PC-9 (cell line): ENCODE measurements at regions of chr12 and their contacts with region 1.

Region 1: DNA sequence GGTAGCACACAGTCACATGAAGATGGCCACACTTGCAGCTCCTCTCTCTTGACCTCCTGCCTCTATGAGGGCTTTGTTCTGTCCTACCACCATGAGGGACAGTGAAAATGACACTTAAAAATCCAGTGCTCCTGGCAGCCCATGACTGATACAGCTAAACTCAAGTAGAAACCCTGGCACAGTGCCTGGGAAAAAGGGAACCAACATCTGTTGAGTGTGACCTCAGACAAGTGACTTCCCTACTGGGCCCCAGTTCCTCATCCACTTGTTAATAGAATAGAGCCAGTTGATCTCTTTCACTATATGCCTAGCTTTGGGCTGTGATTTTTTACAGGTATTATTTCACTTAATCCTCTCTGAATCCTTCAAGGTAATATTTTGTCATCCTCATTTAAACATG is 4.8 kb downstream of the GUCY2C start:
- DNase-seq: no peak
- H3K4me3 ChIP-seq: no peak overlapping the region
- H3K27ac ChIP-seq: no peak overlapping the region
- H3K4me1 ChIP-seq: no peaks in the 10 kb centered on the region
- H3K27me3 ChIP-seq: no peaks in the 10 kb centered on the region
- CTCF ChIP-seq: no peak

Region 2: DNA sequence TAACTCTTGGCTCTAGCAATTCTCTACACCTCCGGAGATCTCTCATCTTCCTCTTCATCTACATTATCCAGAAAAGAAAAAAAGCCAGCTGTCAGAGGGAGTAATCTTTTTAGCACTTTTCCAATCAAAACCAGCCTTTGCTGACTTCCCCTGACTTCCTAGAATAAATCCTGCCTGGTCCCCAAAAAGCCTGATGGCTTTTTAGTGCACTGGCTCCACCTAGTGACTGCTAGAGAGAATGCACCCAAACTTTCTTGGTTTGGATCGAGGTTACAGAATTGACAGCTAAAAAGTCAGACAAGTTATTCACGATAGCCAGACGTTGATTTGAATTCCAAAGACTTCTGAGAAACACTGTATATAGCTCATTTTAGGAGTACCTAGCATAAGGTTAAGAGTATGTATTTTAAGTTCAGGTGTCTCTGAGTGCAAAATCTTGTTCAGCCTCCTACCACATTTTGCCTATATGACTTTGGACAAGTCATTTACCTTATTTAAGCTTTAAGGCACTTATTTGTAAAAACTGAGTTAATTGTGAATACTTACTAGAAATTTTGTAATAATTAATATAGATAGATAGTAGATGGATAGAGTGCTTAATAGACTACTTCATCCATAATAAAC is 524.4 kb before region 1 on chr12:
- CTCF ChIA-PET with region 1: no interaction called
- POLR2A ChIA-PET with region 1: no interaction called
- intact Hi-C with region 1: no loop called
- DNase-seq: peak; percentile 46 to 61
- H3K4me3 ChIP-seq: no peak overlapping the region
- H3K27ac ChIP-seq: no peak overlapping the region
- H3K4me1 ChIP-seq: no peaks in the 10 kb centered on the region
- H3K27me3 ChIP-seq: no peaks in the 10 kb centered on the region
- CTCF ChIP-seq: peak; percentile 98

Region 3: GRCh38 chr12:14716848-14717444 is 25.4 kb after region 1 on chr12:
- CTCF ChIA-PET with region 1: no interaction called
- POLR2A ChIA-PET with region 1: interaction called, 11 read pairs
- intact Hi-C with region 1: no loop called
- DNase-seq: peak in 1 of 2 experiments; percentile 20
- H3K4me3 ChIP-seq: no peak overlapping the region
- H3K27ac ChIP-seq: no peak overlapping the region
- H3K4me1 ChIP-seq: no peaks in the 10 kb centered on the region
- H3K27me3 ChIP-seq: no peaks in the 10 kb centered on the region
- CTCF ChIP-seq: peak; percentile 65

Region 4: GRCh38 chr12:14784471-14784870 is 92.9 kb after region 1 on chr12:
- CTCF ChIA-PET with region 1: interaction called, 12 read pairs
- POLR2A ChIA-PET with region 1: no interaction called
- intact Hi-C with region 1: no loop called
- DNase-seq: no peak
- H3K4me3 ChIP-seq: no peak overlapping the region
- H3K27ac ChIP-seq: no peak overlapping the region
- H3K4me1 ChIP-seq: no peaks in the 10 kb centered on the region
- H3K27me3 ChIP-seq: no peaks in the 10 kb centered on the region
- CTCF ChIP-seq: no peak